ENCODE measurements at regions of chr2 and their contacts with region 1.

Region 1: GRCh38 chr2:157876066-157876787 is at the start of gene ACVR1:
- DNase-seq: peak; percentile 95
- H3K4me3 ChIP-seq: peak within 1 kb of the TSS; percentile 79 to 95 (median 80)
- H3K27ac ChIP-seq: peak within 1 kb of the TSS; percentile 65
- H3K4me1 ChIP-seq: peaks cover 14% of the 10 kb centered on the region
- H3K27me3 ChIP-seq: no peaks in the 10 kb centered on the region
- CTCF ChIP-seq: peak; percentile 37 to 51
- POLR2A ChIP-seq: peak; percentile 48
- total RNA-seq, gene ACVR1: 33.6 and 38.3 TPM in 2 replicates

Region 2: DNA sequence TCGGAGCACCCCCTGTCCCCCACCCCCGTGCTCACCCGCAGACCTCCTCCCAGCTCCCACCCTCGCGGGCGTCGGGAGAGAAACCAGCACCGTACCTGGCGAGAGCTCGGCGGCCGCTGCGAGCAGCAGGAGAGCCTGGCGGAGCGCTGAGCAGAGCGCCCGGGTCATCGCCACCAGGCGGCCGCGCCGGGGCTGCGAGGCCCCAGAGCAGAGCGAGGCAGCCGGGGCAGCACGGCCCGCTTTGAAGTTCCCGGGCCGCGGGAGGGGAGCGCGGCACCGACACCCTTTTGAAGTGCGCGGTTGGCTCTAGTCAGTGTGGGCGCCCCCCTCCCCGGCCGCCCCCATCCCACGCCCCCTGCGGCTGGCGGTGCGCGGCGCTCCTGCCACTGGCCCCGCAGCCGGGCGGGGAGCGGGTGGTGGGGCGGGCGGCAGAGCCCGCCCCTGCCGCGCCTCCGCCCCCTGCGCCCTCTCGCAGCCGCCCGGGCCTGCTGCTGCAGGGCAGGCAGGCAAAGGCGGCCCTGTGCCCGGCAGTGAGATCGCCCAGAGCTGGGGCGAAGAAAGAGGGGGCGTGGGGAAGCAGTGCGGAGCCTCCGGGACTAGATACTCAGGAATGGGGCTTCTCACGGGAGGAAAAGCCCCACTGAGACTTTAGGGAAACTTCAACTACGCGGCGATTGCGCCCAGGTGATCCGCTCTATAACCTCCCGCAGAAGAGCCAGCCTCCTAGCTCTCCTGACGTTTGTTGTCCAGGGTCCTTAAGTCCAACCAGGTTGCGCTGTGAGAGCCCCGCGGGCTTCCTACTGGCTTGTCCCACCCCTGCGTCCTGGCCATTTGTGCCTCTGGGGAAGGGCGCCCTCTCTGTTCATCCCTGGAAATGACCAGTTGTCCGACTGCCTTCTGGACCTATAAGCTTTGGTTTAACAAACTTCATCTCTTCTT is 247.5 kb before region 1 on chr2 and contains the start of gene ACVR1C:
- CTCF ChIA-PET with region 1: no interaction called
- POLR2A ChIA-PET with region 1: no interaction called
- dilution Hi-C with region 1: no loop called
- intact Hi-C with region 1: loop called (anchors 1 kb)
- DNase-seq: peak; percentile 58
- H3K4me3 ChIP-seq: peak within 1 kb of the TSS; percentile 1 to 36 (median 20)
- H3K27ac ChIP-seq: no peak within 1 kb of the TSS
- H3K4me1 ChIP-seq: peaks cover 8% of the 10 kb centered on the region
- H3K27me3 ChIP-seq: peaks cover 20 to 30% of the 10 kb centered on the region in 2 experiments
- CTCF ChIP-seq: peak; percentile 59 to 68
- POLR2A ChIP-seq: no peak
- total RNA-seq, gene ACVR1C: not detected in 2 replicates

Region 3: GRCh38 chr2:157741819-157742484 is 134.3 kb before region 1 on chr2:
- CTCF ChIA-PET with region 1: no interaction called
- POLR2A ChIA-PET with region 1: no interaction called
- dilution Hi-C with region 1: no loop called
- intact Hi-C with region 1: no loop called
- DNase-seq: no peak
- H3K4me3 ChIP-seq: no peak overlapping the region
- H3K27ac ChIP-seq: no peak overlapping the region
- H3K4me1 ChIP-seq: no peaks in the 10 kb centered on the region
- H3K27me3 ChIP-seq: no peaks in the 10 kb centered on the region
- CTCF ChIP-seq: no peak
- POLR2A ChIP-seq: no peak

Region 4: DNA sequence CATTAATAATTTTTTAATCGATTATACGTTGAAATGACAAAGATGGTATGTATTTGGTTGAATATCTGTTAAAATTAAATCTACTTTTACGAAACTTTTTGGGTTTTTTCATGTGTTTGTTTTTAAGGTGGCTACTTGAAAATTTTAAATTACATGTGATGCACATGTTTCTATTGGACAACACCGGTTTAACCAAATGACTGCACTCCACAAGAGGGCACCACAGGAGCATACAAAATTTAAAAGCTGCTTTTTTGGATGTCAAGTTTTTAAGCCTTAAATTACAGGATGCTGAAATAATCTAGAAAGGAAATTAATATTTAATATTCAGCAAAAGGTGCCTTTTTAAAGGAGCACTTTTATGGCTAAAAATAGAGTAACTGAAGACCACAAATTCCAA is 98.8 kb before region 1 on chr2:
- CTCF ChIA-PET with region 1: interaction called, 18 read pairs
- POLR2A ChIA-PET with region 1: no interaction called
- dilution Hi-C with region 1: no loop called
- intact Hi-C with region 1: loop called (anchors 1 kb)
- DNase-seq: peak; percentile 74
- H3K4me3 ChIP-seq: no peak overlapping the region
- H3K27ac ChIP-seq: no peak overlapping the region
- H3K4me1 ChIP-seq: no peaks in the 10 kb centered on the region
- H3K27me3 ChIP-seq: no peaks in the 10 kb centered on the region
- CTCF ChIP-seq: peak; percentile 39 to 50
- POLR2A ChIP-seq: no peak

Region 5: GRCh38 chr2:157784169-157784822 is 91.9 kb before region 1 on chr2:
- CTCF ChIA-PET with region 1: interaction called, 18 read pairs
- POLR2A ChIA-PET with region 1: no interaction called
- dilution Hi-C with region 1: no loop called
- intact Hi-C with region 1: loop called (anchors 1 kb)
- DNase-seq: peak; percentile 82
- H3K4me3 ChIP-seq: no peak overlapping the region
- H3K27ac ChIP-seq: peak overlapping the region; percentile 44
- H3K4me1 ChIP-seq: peaks cover 40% of the 10 kb centered on the region
- H3K27me3 ChIP-seq: no peaks in the 10 kb centered on the region
- CTCF ChIP-seq: no peak
- POLR2A ChIP-seq: no peak

Region 6: GRCh38 chr2:157838442-157839161 is 37.6 kb before region 1 on chr2:
- CTCF ChIA-PET with region 1: interaction called, 8 read pairs
- POLR2A ChIA-PET with region 1: interaction called, 7 read pairs
- dilution Hi-C with region 1: no loop called
- intact Hi-C with region 1: loop called (anchors 1 kb)
- DNase-seq: peak; percentile 91
- H3K4me3 ChIP-seq: peak overlapping the region in 1 of 3 experiments; percentile 73
- H3K27ac ChIP-seq: peak overlapping the region; percentile 99
- H3K4me1 ChIP-seq: peaks cover 37% of the 10 kb centered on the region
- H3K27me3 ChIP-seq: no peaks in the 10 kb centered on the region
- CTCF ChIP-seq: no peak
- POLR2A ChIP-seq: peak; percentile 1

Region 7: GRCh38 chr2:157857881-157858280 is 18.3 kb before region 1 on chr2:
- CTCF ChIA-PET with region 1: interaction called, 6 read pairs
- POLR2A ChIA-PET with region 1: no interaction called
- dilution Hi-C with region 1: no loop called
- intact Hi-C with region 1: loop called (anchors 1 kb)
- DNase-seq: no peak
- H3K4me3 ChIP-seq: no peak overlapping the region
- H3K27ac ChIP-seq: no peak overlapping the region
- H3K4me1 ChIP-seq: peaks cover 18% of the 10 kb centered on the region
- H3K27me3 ChIP-seq: no peaks in the 10 kb centered on the region
- CTCF ChIP-seq: no peak
- POLR2A ChIP-seq: no peak

Region 8: DNA sequence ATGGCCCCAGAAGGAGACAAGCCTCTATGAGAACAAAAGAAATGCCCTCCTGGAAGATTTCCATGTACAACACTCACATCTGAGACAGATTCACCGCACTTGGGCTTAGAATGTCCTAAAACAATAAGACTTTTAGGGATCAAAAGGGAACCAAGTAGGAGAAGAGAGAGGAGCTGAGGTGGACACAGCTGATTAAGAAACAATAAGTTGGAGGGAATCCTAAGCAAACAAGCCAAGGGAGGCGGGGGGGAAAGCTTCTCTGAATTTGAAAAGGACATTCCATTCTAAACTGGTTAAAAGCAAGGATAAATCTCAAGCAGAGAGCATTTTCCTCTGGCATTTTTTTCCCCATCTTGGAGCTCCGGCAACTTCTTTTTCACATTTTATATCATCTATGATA is 10.0 kb before region 1 on chr2:
- CTCF ChIA-PET with region 1: interaction called, 7 read pairs
- POLR2A ChIA-PET with region 1: interaction called, 10 read pairs
- dilution Hi-C with region 1: no loop called
- intact Hi-C with region 1: no loop called
- DNase-seq: peak; percentile 75
- H3K4me3 ChIP-seq: no peak overlapping the region
- H3K27ac ChIP-seq: no peak overlapping the region
- H3K4me1 ChIP-seq: peaks cover 24% of the 10 kb centered on the region
- H3K27me3 ChIP-seq: no peaks in the 10 kb centered on the region
- CTCF ChIP-seq: no peak
- POLR2A ChIP-seq: no peak

Region 9: DNA sequence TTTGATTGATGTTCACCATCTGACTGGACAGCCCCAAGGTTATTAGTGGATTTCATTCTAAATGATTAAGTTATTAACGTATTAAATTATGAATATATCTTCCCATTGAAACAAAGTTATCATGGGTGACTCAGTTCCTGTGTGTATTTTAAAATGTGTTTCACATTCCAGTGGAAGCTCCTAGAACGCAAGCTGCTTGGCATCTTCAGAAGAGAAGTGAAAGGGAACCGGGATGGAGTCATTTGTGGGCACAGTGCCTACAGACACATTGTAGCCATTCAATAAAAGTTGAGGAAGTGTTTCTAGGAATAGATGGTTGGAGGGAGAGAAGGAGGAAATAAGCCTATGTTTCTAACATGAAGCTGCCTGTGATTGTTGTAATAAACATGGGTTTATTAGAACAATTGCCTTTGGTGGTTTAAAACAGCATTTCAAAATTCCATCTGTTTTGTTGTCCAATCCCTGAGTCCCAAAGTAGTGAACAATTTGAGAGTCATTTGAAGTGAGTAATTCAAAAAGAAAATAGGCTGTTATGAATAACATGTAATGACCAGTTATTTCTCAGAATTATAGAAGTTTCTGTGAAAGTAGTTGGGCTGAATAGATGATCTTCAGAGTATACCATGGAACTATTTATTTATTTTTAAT is 724.1 kb after region 1 on chr2:
- CTCF ChIA-PET with region 1: no interaction called
- POLR2A ChIA-PET with region 1: no interaction called
- dilution Hi-C with region 1: no loop called
- intact Hi-C with region 1: no loop called
- DNase-seq: peak; percentile 99
- H3K4me3 ChIP-seq: no peak overlapping the region
- H3K27ac ChIP-seq: peak overlapping the region; percentile 83
- H3K4me1 ChIP-seq: peaks cover 27% of the 10 kb centered on the region
- H3K27me3 ChIP-seq: no peaks in the 10 kb centered on the region
- CTCF ChIP-seq: no peak
- POLR2A ChIP-seq: no peak

Measured in endothelial cell of umbilical vein (primary cell).